ENCODE measurements at regions of chr11 and their contacts with region 1.

Region 1: GRCh38 chr11:69131644-69132300 is 24.0 kb upstream of the SMIM38 start:
- DNase-seq: peak; percentile 70
- ATAC-seq: peak; percentile 92
- H3K4me3 ChIP-seq: no peak overlapping the region
- H3K27ac ChIP-seq: no peak overlapping the region
- H3K4me1 ChIP-seq: no peaks in the 10 kb centered on the region
- H3K27me3 ChIP-seq: no peaks in the 10 kb centered on the region
- CTCF ChIP-seq: peak; percentile 86
- POLR2A ChIP-seq: no peak
- RAD21 ChIP-seq: peak; percentile 86

Region 2: DNA sequence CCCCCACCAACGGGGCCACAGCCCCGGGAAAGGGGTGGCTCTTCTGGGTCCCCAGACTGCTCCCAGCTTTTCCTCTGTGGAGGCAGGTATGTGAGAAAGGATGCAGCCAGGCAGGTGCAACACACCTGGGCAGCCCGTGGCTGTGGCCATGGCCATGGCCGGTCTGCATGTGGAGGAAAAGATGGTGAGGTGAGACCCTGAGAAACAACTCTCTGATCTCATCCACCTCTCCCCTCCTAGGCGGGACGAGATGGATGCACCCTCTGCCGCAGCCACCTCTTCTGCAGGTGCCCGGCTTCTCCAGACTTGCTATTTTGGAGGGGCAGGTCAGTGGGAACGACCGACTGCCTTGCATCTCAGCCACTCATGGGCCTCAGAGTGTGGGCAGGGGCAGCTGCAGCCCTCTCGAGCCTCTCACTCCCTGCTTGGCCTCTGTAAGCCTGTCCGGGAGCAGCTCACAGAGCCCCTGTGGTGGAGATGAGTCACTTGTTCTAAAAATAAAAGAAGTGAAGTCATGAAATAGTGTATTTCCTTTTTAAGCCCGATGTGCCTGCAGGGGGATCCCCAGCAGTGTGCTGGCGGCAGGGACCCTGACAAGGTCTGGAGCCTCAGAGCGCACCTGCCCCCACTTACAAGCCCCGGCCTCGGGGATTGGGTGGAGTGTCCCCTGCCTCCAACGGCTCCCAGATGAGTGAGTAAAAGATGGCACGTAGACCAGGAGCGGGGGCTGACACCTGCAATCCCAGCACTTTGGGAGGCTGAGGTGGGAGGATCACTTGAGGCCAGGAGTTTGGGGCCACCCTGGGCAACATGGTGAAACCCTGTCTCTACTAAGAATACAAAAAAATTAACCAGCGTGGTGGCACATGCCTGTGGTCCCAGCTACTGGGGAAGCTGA is 34.7 kb after region 1 on chr11:
- CTCF ChIA-PET with region 1: interaction called, 3 read pairs
- POLR2A ChIA-PET with region 1: no interaction called
- dilution Hi-C with region 1: no loop called
- in situ Hi-C with region 1: no loop called
- intact Hi-C with region 1: loop called (anchors 1 kb)
- DNase-seq: peak; percentile 93
- ATAC-seq: peak; percentile 98
- H3K4me3 ChIP-seq: no peak overlapping the region
- H3K27ac ChIP-seq: peak overlapping the region; percentile 47
- H3K4me1 ChIP-seq: peaks cover 14% of the 10 kb centered on the region
- H3K27me3 ChIP-seq: no peaks in the 10 kb centered on the region
- CTCF ChIP-seq: peak; percentile 45
- POLR2A ChIP-seq: no peak
- RAD21 ChIP-seq: peak; percentile 49

Region 3: GRCh38 chr11:69296890-69297786 is 165.4 kb after region 1 on chr11:
- CTCF ChIA-PET with region 1: interaction called, 3 read pairs
- POLR2A ChIA-PET with region 1: no interaction called
- dilution Hi-C with region 1: no loop called
- in situ Hi-C with region 1: no loop called
- intact Hi-C with region 1: loop called (anchors 10 kb)
- DNase-seq: peak; percentile 99
- ATAC-seq: peak; percentile 59
- H3K4me3 ChIP-seq: no peak overlapping the region
- H3K27ac ChIP-seq: peak overlapping the region; percentile 92
- H3K4me1 ChIP-seq: peaks cover 47% of the 10 kb centered on the region
- H3K27me3 ChIP-seq: no peaks in the 10 kb centered on the region
- CTCF ChIP-seq: no peak
- POLR2A ChIP-seq: no peak
- RAD21 ChIP-seq: peak; percentile 33; the same call in 1 of the 2 replicates